ENCODE measurements at regions of chr7 and their contacts with region 1.

Region 1: GRCh38 chr7:137462074-137462715 is 118.7 kb upstream of the PTN start:
- DNase-seq: no peak
- H3K4me3 ChIP-seq: no peak overlapping the region
- H3K27ac ChIP-seq: no peak overlapping the region
- H3K4me1 ChIP-seq: no peaks in the 10 kb centered on the region
- H3K27me3 ChIP-seq: no peaks in the 10 kb centered on the region
- CTCF ChIP-seq: no peak
- POLR2A ChIP-seq: no peak

Region 2: DNA sequence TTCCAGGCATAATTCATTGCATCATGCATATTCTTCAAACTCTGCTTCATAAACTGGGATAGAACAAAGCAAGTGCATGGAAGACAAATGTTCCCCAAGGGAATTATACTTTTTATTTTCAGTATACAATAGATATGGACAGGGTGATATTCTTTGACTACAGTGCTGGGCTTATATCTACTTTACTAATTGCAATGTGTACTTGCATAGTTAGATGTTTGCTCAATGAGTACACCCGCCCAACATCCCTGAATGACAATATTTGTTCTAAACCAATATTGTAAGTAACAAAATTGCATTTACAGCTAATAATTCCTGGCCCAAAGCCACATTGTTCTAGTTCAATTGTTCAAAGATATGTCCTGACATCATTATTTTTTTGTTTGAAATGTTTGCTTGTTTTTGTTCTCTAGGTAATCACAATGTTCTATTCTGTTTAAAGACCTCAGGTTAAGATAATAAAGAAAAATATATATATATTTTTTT is 290.0 kb before region 1 on chr7:
- intact Hi-C with region 1: loop called (anchors 10 kb)
- DNase-seq: no peak
- H3K4me3 ChIP-seq: no peak overlapping the region
- H3K27ac ChIP-seq: no peak overlapping the region
- H3K4me1 ChIP-seq: no peaks in the 10 kb centered on the region
- H3K27me3 ChIP-seq: no peaks in the 10 kb centered on the region
- CTCF ChIP-seq: no peak
- POLR2A ChIP-seq: no peak

Measured in thyroid gland (tissue), 4 donors.